ENCODE measurements at regions of chr15 and their contacts with region 1.

Region 1: DNA sequence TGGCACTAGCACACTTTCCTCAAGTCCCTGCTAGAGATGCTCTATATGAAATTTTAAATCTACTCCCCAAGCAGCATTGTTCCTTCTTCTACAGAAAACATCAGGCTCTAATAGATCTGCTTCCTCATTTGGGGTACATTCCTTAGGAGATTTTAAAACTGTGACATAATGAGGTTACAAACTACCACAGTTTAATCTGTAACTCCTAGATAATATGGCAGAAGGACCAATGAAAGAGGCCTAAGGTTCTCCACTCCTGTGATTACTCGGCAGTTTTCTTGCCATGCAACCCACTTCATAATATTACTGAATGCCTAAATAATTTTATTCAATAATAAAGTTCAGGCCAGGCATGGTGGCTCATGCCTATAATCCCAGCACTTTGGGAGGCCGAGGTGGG is 16.1 kb downstream of the ZNF106 start:
- DNase-seq: no peak
- H3K4me3 ChIP-seq: no peak overlapping the region
- H3K27ac ChIP-seq: no peak overlapping the region
- H3K4me1 ChIP-seq: no peaks in the 10 kb centered on the region
- H3K27me3 ChIP-seq: no peaks in the 10 kb centered on the region
- CTCF ChIP-seq: no peak

Region 2: DNA sequence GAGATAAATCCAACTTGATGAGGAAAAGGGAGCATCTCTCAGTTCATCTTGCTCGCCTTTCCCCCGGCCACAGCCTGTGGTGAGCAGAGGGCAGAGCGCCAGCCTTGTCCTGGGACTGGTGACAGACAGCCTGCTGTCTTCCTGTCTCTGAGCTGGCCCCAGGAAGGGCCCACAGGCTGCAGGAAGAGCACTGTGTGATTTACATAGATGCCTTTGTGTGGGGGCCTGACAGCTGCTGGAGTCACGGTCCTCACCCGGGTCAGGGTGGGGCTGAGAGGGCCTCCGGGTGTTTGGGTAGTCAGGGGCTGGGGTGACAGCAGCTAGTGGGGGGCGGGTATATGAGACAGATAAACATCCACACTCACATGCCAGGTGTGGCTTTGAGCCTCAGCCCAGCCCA is 409.8 kb before region 1 on chr15:
- CTCF ChIA-PET with region 1: no interaction called
- dilution Hi-C with region 1: no loop called
- in situ Hi-C with region 1: no loop called
- intact Hi-C with region 1: loop called (anchors 1 kb)
- DNase-seq: no peak
- H3K4me3 ChIP-seq: no peak overlapping the region
- H3K27ac ChIP-seq: no peak overlapping the region
- H3K4me1 ChIP-seq: peaks cover 3% of the 10 kb centered on the region
- H3K27me3 ChIP-seq: no peaks in the 10 kb centered on the region
- CTCF ChIP-seq: no peak

Region 3: GRCh38 chr15:42207674-42208579 is 266.9 kb before region 1 on chr15 and contains the start of gene VPS39:
- CTCF ChIA-PET with region 1: no interaction called
- dilution Hi-C with region 1: no loop called
- in situ Hi-C with region 1: no loop called
- intact Hi-C with region 1: loop called (anchors 5 kb)
- DNase-seq: peak; percentile 78
- H3K4me3 ChIP-seq: peak within 1 kb of the TSS; percentile 78 to 95 (median 87)
- H3K27ac ChIP-seq: peak within 1 kb of the TSS; percentile 83
- H3K4me1 ChIP-seq: peaks cover 7% of the 10 kb centered on the region
- H3K27me3 ChIP-seq: no peaks in the 10 kb centered on the region
- CTCF ChIP-seq: no peak
- total RNA-seq, gene VPS39: 49.6 to 52.8 TPM

Region 4: DNA sequence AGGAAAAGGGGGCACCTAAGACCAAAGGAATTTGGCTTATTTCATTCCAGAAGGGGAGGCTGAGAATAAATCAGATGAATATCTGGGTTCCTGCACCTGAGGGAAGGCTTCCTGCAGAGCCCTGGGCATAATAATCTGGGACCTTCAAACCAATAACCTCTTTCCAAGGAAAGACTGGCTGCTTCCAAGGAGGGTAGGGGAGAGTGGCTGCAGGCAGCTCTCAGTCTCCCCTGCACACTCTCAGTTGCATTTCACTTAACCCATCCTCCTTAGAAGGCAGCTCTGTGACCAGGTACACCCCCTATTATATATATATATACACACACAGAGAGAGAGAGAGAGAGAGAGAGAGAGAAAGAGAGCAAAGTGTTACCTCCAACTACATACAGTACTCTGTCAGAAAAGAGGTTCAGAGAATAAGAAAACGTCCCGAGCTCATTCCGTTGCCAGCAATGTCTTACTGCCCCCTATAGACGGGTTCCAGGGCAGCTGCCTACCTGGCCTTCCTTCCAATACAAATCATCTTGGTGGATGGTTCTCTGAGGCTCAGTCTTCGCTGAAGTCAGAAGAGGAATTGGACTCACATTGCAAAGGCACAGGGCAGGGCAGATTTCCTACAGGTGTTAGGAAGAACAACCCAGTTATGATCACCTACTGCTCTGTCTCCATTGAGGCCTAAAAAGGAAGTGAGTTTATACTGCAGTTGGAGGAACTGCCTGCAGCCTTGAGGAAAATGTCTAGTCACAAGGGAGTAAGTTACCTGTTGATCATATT is 89.4 kb before region 1 on chr15:
- CTCF ChIA-PET with region 1: interaction called, 11 read pairs
- dilution Hi-C with region 1: no loop called
- in situ Hi-C with region 1: no loop called
- intact Hi-C with region 1: no loop called
- DNase-seq: peak; percentile 21
- H3K4me3 ChIP-seq: no peak overlapping the region
- H3K27ac ChIP-seq: no peak overlapping the region
- H3K4me1 ChIP-seq: no peaks in the 10 kb centered on the region
- H3K27me3 ChIP-seq: no peaks in the 10 kb centered on the region
- CTCF ChIP-seq: peak; percentile 60 to 86

Region 5: DNA sequence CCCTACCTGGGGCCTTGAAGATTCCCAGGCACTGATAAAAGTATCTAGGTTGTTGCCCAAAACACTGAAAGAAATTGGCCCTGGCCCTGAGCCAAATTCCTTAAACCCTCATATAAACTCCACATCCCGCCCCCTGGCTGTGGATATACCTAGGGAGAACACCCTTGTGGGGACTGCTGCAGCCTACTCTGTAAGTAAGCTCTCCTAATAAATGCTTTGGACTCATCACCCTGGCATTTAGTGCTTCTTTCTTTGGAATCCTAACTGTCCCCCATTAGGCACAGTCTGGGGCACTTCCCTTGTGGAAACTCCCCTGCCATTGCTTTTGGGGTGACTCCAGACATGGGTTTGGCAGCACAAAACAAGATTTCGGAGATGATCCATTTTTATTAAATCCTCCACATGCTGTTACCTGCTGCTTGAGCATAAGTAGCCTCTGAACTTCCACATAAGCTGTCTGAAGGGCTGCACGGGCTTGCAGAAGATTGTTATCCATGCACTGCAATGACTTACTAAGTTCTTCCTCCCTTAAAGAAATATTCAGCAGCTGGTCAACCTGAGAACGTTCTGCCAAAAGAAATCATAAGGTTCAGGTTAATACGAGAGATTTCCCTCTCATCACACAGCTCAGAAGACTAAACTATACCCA is 30.3 kb before region 1 on chr15:
- CTCF ChIA-PET with region 1: no interaction called
- dilution Hi-C with region 1: no loop called
- in situ Hi-C with region 1: no loop called
- intact Hi-C with region 1: no loop called
- DNase-seq: peak; percentile 75
- H3K4me3 ChIP-seq: no peak overlapping the region
- H3K27ac ChIP-seq: no peak overlapping the region
- H3K4me1 ChIP-seq: peaks cover 4% of the 10 kb centered on the region
- H3K27me3 ChIP-seq: no peaks in the 10 kb centered on the region
- CTCF ChIP-seq: peak in 1 of 2 donors; percentile 25